ENCODE measurements at regions of chr5 and their contacts with region 1.

Region 1: DNA sequence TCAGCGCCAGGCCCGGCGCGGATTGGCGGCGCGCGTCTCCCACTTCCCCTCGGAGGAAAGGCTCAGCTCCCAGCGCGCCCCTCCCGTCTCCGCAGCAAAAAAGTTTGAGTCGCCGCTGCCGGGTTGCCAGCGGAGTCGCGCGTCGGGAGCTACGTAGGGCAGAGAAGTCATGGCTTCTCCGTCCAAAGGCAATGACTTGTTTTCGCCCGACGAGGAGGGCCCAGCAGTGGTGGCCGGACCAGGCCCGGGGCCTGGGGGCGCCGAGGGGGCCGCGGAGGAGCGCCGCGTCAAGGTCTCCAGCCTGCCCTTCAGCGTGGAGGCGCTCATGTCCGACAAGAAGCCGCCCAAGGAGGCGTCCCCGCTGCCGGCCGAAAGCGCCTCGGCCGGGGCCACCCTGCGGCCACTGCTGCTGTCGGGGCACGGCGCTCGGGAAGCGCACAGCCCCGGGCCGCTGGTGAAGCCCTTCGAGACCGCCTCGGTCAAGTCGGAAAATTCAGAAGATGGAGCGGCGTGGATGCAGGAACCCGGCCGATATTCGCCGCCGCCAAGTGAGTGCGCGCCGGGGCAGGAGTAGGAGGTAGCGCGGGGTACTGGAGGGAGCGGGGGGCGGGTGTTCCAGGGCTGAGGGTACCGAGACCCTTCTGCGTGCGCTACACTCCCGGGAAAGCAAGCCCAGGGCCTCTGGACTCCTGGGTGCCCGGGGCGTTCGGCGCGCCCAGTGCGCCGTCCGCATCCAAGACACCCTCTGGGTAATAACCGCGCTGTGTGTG is at the start of gene MSX2:
- DNase-seq: peak; percentile 96
- H3K4me3 Mint-ChIP-seq: peak within 1 kb of the TSS; percentile 86
- H3K27ac Mint-ChIP-seq: peak within 1 kb of the TSS; percentile 75
- H3K4me1 Mint-ChIP-seq: peaks cover 17% of the 10 kb centered on the region
- H3K27me3 Mint-ChIP-seq: peaks cover 30% of the 10 kb centered on the region
- CTCF ChIP-seq: no peak
- total RNA-seq, gene MSX2: 4.8 and 5.6 TPM in 2 replicates

Region 2: GRCh38 chr5:174523311-174524071 is 201.2 kb before region 1 on chr5:
- CTCF ChIA-PET with region 1: interaction called, 3 read pairs
- POLR2A ChIA-PET with region 1: no interaction called
- intact Hi-C with region 1: loop called (anchors 1 kb)
- DNase-seq: no peak
- H3K4me3 Mint-ChIP-seq: no peak overlapping the region
- H3K27ac Mint-ChIP-seq: no peak overlapping the region
- H3K4me1 Mint-ChIP-seq: no peaks in the 10 kb centered on the region
- H3K27me3 Mint-ChIP-seq: peaks cover 14% of the 10 kb centered on the region
- CTCF ChIP-seq: peak; percentile 36

Region 3: GRCh38 chr5:174751154-174752000 is 26.7 kb after region 1 on chr5:
- CTCF ChIA-PET with region 1: interaction called, 6 read pairs
- POLR2A ChIA-PET with region 1: interaction called, 8 read pairs
- intact Hi-C with region 1: loop called (anchors 2 kb)
- DNase-seq: peak; percentile 25
- H3K4me3 Mint-ChIP-seq: peak overlapping the region; percentile 74
- H3K27ac Mint-ChIP-seq: no peak overlapping the region
- H3K4me1 Mint-ChIP-seq: peaks cover 5% of the 10 kb centered on the region
- H3K27me3 Mint-ChIP-seq: no peaks in the 10 kb centered on the region
- CTCF ChIP-seq: no peak